ENCODE measurements at regions of chr16 and their contacts with region 1.

Region 1: DNA sequence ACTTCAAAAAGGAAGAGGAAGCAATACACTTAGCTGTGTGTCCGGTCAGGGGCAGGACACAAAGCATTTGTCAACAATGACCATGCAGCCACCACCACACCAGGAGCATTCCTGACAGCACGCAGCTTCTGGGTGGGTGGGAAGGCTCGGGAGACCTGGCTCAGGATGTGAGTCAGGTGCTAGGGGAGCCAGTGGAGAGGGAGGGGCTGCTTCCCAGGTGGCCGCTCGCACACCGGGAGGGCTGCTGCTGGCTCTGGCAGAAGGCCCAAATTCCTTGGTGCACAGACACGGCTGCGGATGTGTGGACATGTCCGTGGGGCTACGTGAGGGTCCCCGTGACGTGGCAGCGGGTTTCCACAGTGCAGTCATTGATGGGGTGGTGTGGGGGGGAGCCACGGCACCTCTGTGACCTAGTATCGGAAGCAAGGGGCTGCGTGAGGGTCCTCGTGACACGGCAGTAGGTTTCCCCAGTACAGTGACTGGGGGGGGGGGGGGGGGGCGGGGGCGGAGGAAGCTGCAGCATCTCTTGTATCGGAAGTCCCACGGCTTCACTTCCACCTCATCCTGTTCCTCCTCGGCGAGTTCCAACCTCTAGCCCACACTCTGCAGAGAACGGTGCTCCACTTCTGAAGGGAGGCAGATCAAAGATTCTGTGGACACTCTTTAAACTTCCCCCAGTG is 112.8 kb downstream of the ZNF778 start:
- DNase-seq: no peak
- H3K4me3 ChIP-seq: no peak overlapping the region
- H3K27ac ChIP-seq: no peak overlapping the region
- H3K4me1 ChIP-seq: peaks cover 15% of the 10 kb centered on the region
- H3K27me3 ChIP-seq: no peaks in the 10 kb centered on the region
- CTCF ChIP-seq: no peak
- POLR2A ChIP-seq: no peak

Region 2: DNA sequence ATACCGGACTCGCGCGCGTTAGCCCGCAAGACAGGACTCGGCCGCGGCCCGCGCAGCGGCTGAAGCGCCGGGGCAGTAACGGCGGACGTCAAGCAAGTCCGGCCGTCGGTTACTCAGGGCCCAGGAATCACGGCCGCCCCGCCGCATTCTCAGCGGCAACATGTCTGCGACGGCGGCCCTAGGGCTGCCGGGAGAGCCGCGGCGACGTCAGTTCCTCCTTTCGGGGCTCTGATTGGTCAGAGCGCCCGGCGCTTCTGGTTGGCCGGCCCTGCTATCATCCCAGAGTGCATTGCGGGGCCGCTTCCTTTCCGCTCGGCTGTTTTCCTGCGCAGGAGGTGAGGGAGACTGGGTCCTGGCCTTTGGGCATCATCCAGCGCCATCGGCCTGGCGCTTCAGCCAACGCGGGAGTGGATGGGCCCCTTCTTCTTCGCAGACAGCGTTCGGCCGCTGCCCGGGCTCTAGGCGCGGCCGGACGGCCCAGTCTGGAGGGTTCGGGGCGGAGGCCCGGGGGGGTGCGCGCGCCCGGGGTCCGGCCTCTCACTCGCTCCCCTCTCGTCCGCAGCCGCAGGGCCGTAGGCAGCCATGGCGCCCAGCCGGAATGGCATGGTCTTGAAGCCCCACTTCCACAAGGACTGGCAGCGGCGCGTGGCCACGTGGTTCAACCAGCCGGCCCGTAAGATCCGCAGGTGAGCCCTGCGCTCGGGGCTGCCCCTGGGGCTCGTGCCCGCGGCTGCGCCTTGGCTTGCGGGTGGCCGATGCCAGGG is 230.2 kb after region 1 on chr16 and contains the start of gene RPL13:
- intact Hi-C with region 1: loop called (anchors 10 kb)
- DNase-seq: peak; percentile 95
- H3K4me3 ChIP-seq: peak within 1 kb of the TSS; percentile 67 to 94
- H3K27ac ChIP-seq: peak within 1 kb of the TSS; percentile 91
- H3K4me1 ChIP-seq: peaks cover 15% of the 10 kb centered on the region
- H3K27me3 ChIP-seq: no peaks in the 10 kb centered on the region
- CTCF ChIP-seq: peak in 1 of 4 experiments; percentile 31
- POLR2A ChIP-seq: peak; percentile 94
- total RNA-seq, gene RPL13: 6,889 to 11,644 TPM

Measured in prostate gland (tissue), 2 donors.